ENCODE measurements at regions of chr11 and their contacts with region 1.

Region 1: GRCh38 chr11:47373876-47374720 is 4.2 kb downstream of the SPI1 start:
- DNase-seq: peak; percentile 91

Region 2: DNA sequence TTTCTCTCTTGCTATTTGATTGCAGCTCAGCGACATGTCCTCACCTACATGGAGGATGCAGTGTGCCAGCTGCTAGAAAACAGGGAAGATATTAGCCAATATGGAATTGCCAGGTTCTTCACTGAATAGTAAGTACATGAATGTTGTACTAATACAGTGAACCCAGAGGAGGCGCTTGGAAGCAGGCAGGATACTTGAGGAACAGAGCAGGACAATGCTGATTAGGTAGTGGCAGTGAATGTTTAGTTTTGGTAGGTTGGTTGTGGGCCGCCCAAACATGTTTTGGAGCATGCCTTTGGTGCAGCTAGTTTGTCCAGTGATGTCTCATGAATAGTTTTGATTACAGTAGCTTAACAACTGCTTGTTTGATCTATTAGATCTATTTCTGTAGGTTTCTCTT is 386.9 kb before region 1 on chr11:
- intact Hi-C with region 1: no loop called
- DNase-seq: no peak

Region 3: DNA sequence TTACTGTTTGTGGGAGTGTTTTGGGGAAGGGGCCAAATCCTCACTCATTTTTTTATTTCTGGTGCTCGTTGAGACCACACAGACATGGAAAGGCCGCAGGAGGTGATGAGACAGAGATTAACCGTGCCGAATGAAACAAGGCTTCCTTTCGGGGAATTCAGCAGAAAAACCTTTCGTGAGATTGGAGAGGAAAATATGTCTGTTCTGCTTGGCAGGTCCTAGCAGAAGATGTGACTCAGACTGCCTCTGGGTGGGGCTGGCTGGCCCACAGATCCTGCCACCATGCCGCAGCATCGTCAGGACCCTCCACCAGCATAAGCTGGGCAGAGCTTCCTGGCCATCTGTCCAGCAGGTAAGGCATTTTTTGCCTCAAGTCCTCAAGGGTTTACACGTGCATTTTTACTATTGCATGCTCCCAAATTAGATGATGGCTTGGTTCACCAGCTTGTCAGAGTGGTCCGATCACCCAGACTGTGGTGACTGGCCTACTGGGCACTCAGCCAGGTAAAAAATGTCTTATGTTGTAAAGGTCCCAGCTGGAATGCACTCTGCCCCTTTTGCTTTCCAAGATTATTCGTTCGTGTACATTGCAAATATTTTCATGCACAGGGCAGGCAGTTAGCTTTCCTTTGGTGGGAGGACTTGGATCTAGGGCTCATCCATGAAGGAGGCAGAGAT is 157.8 kb before region 1 on chr11:
- intact Hi-C with region 1: no loop called
- DNase-seq: no peak

Region 4: GRCh38 chr11:47399860-47400767 is 26.0 kb after region 1 on chr11:
- intact Hi-C with region 1: loop called (anchors 2 kb)
- DNase-seq: no peak

Region 5: DNA sequence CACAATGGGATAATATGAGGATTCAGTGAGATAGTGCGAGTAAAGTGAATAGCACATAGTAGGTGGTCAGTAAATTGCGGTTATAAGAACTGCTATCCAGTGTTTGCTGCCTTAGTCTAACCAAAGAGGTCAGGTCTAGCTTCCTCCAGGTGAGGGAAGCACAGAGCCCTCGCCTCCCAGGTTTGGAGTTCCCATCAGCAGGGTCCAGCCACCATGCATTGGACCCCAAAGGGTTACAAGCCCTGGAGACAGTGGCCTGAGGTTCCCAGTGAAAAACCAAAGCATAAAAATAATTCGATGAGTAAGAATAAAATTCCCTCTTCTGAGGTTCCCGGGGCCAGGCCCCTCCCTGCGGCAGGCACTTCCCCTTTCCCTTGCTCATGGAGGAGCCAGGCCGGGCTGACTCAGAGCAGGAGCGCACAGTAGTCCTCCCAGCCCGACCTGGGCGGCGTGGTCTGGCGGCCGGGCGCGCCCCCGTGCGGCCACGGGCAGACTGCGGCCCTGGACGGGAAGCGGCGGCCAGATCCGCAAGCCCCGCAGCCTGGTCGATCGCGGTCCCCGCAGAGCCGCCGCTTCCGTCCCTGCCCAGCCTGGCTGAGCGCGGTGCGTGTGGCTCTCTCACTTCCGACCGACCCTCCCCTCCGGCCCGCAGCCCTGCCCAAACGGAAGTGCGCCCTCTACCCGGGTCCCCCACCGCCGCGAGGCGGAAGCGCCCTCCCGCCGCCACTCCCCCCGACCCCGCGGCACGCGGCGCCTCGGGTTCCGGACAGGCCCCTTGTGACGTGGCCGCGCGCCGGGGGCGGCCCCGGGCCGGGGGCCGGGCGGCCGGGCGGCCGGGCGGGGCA is 33.9 kb after region 1 on chr11 and contains the start of gene SLC39A13:
- intact Hi-C with region 1: loop called (anchors 2 kb)
- DNase-seq: peak; percentile 98
- total RNA-seq, gene SLC39A13: 72.2 TPM

Region 6: GRCh38 chr11:47453365-47453764 is 79.3 kb after region 1 on chr11:
- intact Hi-C with region 1: loop called (anchors 2 kb)
- DNase-seq: no peak

Region 7: DNA sequence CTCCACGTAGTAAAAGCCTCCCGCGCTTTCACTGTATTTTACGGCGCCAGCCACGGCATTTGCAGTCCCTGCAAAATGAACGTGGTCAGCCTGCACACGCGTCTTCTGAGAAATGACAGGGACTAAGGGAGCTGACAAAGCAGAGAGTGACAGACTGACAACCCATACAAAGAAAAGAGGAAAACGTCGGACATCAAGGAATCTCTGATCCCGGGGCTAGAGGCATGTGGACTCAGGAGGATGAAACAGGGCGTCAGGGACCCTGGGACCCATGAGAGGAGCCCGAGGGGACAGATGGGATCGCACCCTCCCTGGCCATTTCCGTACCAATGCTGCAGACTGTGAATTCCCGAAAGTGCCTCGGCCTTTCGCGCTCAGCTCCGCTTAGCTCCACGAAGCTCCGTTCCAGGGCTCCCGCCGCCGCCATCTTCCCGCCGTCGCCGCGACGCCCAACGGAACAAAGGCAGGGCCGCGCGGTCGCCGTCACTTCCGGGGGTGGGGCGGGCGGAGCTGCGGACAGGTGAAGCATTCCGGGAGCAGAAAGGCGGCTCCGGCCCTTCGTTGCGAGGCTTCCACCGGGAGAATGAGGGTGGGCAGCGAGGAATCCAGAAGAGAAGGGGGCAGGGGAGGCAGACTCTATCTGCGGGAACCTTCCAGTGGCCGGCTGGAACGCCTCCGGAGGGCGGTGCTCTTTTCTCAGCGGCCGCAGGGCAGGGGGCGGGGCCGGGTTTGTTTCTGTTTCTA is 474.0 kb after region 1 on chr11 and contains the start of gene NUP160:
- intact Hi-C with region 1: loop called (anchors 10 kb)
- DNase-seq: peak; percentile 95
- total RNA-seq, gene NUP160: 12.8 TPM